Mammary epithelial cell (primary cell): ENCODE measurements at regions of chr3 and their contacts with region 1.

Region 1: GRCh38 chr3:14548321-14548729 is 8.2 kb upstream of the GRIP2 start:
- DNase-seq: peak; percentile 20
- H3K4me3 ChIP-seq: no peak overlapping the region
- H3K27ac ChIP-seq: no peak overlapping the region
- H3K4me1 ChIP-seq: peaks cover 9% of the 10 kb centered on the region
- H3K27me3 ChIP-seq: peaks cover under 1% of the 10 kb centered on the region
- CTCF ChIP-seq: peak; percentile 58 to 73

Region 2: DNA sequence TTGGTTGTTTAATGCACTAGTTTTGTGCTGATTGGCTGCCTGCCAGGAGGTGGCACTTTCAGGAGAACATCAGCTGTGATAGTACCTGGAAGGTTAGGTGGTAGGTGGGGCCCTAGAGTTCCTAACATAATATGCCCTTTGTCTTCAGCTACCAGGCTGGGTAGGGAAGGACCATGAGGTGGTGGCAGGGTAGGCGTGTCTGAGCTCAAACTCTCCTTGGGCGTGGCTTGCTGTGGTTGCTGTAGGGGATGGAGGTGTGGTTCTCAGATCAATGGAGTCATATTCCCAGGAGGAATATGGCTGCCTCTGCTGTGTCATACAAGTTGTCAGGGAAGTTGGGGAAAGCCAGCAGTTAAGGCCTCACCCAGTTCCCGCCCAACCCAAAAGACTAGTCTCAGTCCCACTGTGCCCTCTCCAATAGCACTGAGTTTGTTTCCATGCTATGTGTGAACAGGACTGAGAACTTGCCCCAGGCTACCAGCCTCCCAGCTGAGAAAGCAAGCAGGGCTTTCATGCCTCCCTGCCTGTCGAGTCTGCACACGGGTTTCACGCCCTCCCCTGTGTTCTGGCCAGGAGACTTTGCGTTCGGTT is 531.3 kb before region 1 on chr3:
- CTCF ChIA-PET with region 1: no interaction called
- dilution Hi-C with region 1: no loop called
- in situ Hi-C with region 1: no loop called
- intact Hi-C with region 1: no loop called
- DNase-seq: peak; percentile 96
- H3K4me3 ChIP-seq: no peak overlapping the region
- H3K27ac ChIP-seq: peak overlapping the region; percentile 51
- H3K4me1 ChIP-seq: peaks cover 13% of the 10 kb centered on the region
- H3K27me3 ChIP-seq: no peaks in the 10 kb centered on the region
- CTCF ChIP-seq: no peak

Region 3: DNA sequence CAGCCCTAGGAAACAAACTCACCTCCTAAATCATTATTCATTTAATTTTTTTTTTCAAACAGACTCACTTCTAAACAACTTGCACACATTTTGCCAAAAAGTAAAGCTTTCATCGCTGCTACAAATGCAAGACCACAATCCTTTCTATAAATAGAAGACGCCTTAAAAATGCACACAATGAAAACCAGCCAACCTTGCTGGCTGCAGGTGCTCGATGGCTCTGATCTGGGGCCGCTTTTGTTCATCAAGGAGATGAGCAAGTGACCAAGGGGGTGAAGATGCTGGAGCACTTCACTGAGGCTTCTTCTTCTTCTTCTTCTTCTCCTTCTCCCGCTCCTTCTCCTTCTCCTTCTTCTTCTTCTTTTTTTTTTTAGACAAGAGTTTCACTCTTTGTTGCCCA is 158.6 kb before region 1 on chr3:
- CTCF ChIA-PET with region 1: interaction called, 28 read pairs
- dilution Hi-C with region 1: no loop called
- in situ Hi-C with region 1: no loop called
- intact Hi-C with region 1: no loop called
- DNase-seq: no peak
- H3K4me3 ChIP-seq: no peak overlapping the region
- H3K27ac ChIP-seq: no peak overlapping the region
- H3K4me1 ChIP-seq: no peaks in the 10 kb centered on the region
- H3K27me3 ChIP-seq: no peaks in the 10 kb centered on the region
- CTCF ChIP-seq: no peak

Region 4: DNA sequence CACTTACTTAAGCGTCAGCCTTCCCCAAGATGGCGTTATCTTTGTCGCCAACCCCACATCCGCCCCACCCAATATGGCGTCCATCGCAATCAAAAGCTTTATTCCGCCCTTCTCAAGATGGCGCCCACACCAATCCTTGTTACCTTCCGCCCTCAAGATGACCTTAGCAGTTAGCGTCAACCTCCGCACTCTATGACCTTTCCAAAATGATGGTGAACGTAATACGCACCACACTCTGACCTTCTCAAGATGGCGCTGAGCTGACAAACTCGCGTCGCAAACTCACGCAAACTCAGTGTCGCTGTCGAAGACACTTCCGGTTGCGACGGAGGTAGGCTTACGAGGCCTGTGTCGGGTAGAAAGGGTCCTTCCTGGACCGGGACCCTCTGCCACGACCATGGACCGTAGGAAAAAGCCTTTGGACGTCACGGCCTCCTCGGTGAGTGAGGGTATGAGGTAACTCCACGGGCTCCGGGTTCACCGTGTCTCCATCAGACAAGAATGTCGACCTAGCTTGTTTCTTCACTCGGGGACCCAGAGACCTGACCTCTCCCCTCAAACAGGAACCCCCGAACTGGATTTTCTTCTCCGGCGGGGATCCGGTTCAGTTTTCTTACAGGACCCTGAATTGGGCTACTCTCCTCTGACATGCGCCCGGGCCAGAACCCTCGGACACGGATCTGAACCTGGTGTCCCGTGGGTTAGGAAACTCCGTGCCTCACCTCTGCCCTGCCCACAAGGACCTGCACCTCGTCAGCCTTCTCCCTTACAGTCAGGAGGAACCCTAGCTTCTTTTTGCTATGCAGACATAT is 103.3 kb after region 1 on chr3 and contains the start of gene CCDC174:
- CTCF ChIA-PET with region 1: no interaction called
- dilution Hi-C with region 1: no loop called
- in situ Hi-C with region 1: no loop called
- intact Hi-C with region 1: loop called (anchors 5 kb)
- DNase-seq: peak; percentile 99
- H3K4me3 ChIP-seq: peak within 1 kb of the TSS; percentile 54 to 86 (median 66)
- H3K27ac ChIP-seq: peak within 1 kb of the TSS; percentile 71
- H3K4me1 ChIP-seq: peaks cover 14% of the 10 kb centered on the region
- H3K27me3 ChIP-seq: no peaks in the 10 kb centered on the region
- CTCF ChIP-seq: no peak
- total RNA-seq, gene CCDC174: 13.5 to 24.9 TPM

Region 5: GRCh38 chr3:14780927-14781507 is 232.7 kb after region 1 on chr3:
- CTCF ChIA-PET with region 1: no interaction called
- dilution Hi-C with region 1: no loop called
- in situ Hi-C with region 1: no loop called
- intact Hi-C with region 1: no loop called
- DNase-seq: peak; percentile 39
- H3K4me3 ChIP-seq: no peak overlapping the region
- H3K27ac ChIP-seq: no peak overlapping the region
- H3K4me1 ChIP-seq: no peaks in the 10 kb centered on the region
- H3K27me3 ChIP-seq: no peaks in the 10 kb centered on the region
- CTCF ChIP-seq: peak; percentile 43 to 65